Caco-2 (cell line): ENCODE measurements at regions of chr11 and their contacts with region 1.

Region 1: GRCh38 chr11:27234043-27234668 is 128.9 kb downstream of the CCDC34 start:
- DNase-seq: peak; percentile 61 to 75
- H3K4me3 ChIP-seq: no peak overlapping the region
- H3K4me3 Mint-ChIP-seq: peak overlapping the region; percentile 22
- H3K27ac Mint-ChIP-seq: no peak overlapping the region
- H3K4me1 ChIP-seq: peaks cover 38% of the 10 kb centered on the region
- H3K4me1 Mint-ChIP-seq: peaks cover 18% of the 10 kb centered on the region
- H3K27me3 ChIP-seq: no peaks in the 10 kb centered on the region
- H3K27me3 Mint-ChIP-seq: no peaks in the 10 kb centered on the region
- CTCF ChIP-seq: peak in 1 of 2 experiments; percentile 22

Region 2: DNA sequence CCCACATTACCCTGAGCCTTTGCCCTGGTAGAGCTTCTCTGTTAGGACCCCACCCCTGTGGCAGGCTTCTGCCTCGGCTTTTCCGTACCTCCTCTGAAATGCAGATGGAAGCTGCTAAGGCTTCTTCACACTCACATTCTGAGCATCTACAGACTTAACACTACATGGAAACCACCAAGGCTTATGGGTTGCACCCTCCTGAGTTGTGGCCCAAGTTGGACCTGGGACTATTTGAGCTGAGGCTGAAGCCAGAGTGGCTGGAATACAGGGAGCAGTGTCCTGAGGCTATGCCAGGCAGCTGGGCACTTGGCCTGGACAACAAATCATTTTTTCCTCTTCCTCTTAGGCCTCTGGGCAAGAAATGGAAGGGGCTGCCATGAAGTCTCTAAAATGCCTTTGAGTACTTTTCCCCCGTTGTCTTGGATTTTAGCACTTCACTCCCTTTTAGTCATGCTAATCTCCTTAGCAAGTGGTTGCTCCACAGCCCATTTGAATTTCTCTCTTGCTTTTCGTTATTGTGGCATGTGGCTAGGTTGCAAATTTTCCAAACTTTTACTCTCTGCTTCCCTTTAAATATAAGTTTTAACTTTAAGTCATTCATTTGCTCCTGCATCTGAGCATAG is 355.1 kb before region 1 on chr11:
- CTCF ChIA-PET with region 1: no interaction called
- POLR2A ChIA-PET with region 1: no interaction called
- intact Hi-C with region 1: no loop called
- DNase-seq: no peak
- H3K4me3 ChIP-seq: no peak overlapping the region
- H3K4me3 Mint-ChIP-seq: no peak overlapping the region
- H3K27ac Mint-ChIP-seq: no peak overlapping the region
- H3K4me1 ChIP-seq: no peaks in the 10 kb centered on the region
- H3K4me1 Mint-ChIP-seq: no peaks in the 10 kb centered on the region
- H3K27me3 ChIP-seq: no peaks in the 10 kb centered on the region
- H3K27me3 Mint-ChIP-seq: no peaks in the 10 kb centered on the region
- CTCF ChIP-seq: no peak

Region 3: DNA sequence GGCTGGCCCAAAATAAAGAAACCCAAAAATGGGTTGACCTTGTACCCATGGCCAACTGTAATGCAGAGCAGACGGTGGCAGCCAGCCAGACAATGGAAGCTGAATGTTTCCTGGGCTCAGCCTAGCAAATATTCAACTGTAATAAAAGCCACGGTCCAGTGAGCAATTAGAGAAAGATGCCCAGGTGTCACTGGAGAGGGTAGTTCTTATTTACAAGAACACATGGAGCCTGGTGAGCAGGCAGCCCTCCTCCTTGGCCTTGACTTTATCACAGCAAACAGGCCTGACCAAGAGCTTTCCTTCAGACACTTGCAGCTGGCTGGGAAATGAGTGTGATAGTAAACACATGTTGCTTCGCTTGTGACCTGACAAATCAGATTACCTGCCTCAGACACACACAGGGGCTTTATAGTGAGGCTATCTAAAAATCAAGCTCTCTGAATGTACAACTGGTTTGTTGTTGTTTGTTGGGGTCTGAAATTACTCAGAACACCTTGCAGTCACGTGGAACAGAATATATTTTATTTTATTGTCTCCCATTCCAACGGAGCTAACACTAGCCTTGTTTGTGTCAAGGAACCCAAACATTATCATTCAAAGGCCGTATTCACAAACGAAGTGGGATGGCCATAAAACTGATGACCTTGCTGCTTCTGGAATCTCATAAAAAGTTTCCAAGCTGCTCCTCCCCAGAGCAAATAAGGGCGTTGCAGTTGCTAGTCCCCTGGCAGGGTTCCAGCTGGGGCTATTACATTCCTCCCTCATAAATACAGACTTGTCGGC is 32.5 kb before region 1 on chr11:
- CTCF ChIA-PET with region 1: no interaction called
- POLR2A ChIA-PET with region 1: no interaction called
- intact Hi-C with region 1: loop called (anchors 1 kb)
- DNase-seq: peak; percentile 89 to 94
- H3K4me3 ChIP-seq: no peak overlapping the region
- H3K4me3 Mint-ChIP-seq: peak overlapping the region; percentile 63
- H3K27ac Mint-ChIP-seq: peak overlapping the region; percentile 87
- H3K4me1 ChIP-seq: peaks cover 42% of the 10 kb centered on the region
- H3K4me1 Mint-ChIP-seq: peaks cover 48% of the 10 kb centered on the region
- H3K27me3 ChIP-seq: no peaks in the 10 kb centered on the region
- H3K27me3 Mint-ChIP-seq: no peaks in the 10 kb centered on the region
- CTCF ChIP-seq: no peak